Activated naive CD4-positive, alpha-beta T cell treated with anti-CD3 and anti-CD28 coated beads for 36 hours (primary cell): ENCODE measurements at regions of chr6 and their contacts with region 1.

Region 1: GRCh38 chr6:63352587-63353285 is 33.0 kb upstream of the LGSN start:
- DNase-seq: peak; percentile 11
- H3K4me3 Mint-ChIP-seq: no peak overlapping the region
- H3K27ac Mint-ChIP-seq: no peak overlapping the region
- H3K4me1 Mint-ChIP-seq: peaks cover 8% of the 10 kb centered on the region
- H3K27me3 Mint-ChIP-seq: peaks cover 22% of the 10 kb centered on the region

Region 2: DNA sequence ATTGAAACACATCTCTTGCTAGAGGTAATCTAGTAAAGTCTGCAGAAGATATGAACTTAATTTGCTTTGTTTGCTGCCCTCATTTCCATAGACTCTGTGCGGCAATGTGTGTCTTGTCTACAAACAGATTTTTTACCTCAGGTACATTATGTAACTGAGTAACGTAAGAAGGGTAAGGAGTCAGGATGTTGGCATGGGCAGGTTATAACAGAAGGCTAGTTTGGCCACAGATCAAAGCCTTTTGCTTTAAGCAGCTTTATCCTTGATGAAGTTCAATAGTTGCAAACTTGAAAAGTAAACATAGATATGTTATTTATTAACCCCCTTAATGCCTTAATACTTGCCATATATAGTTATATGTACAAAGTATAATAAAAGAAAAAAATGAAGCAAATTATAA is 533.1 kb before region 1 on chr6:
- CTCF ChIA-PET with region 1: no interaction called
- intact Hi-C with region 1: no loop called
- DNase-seq: no peak
- H3K4me3 Mint-ChIP-seq: no peak overlapping the region
- H3K27ac Mint-ChIP-seq: no peak overlapping the region
- H3K4me1 Mint-ChIP-seq: no peaks in the 10 kb centered on the region
- H3K27me3 Mint-ChIP-seq: no peaks in the 10 kb centered on the region

Region 3: DNA sequence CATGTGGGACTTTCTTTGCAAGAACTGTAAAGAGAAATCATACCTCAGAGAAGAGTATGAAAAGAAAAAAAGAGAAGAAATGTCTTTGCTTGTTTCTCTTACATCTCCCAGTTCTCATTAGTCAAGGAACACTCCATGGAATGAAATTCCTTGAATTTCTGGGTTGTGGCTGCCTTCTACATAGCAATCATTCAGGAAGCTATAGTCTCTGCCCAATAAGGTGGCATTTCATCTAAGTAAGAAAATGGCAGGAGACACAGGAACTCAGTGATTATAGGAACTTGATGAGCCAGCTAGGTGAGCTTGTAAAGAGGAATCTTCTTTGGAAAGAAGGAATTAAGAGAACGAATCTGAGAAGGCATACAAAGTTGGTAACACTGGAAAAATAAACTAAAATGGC is 338.4 kb before region 1 on chr6:
- CTCF ChIA-PET with region 1: no interaction called
- intact Hi-C with region 1: no loop called
- DNase-seq: no peak
- H3K4me3 Mint-ChIP-seq: no peak overlapping the region
- H3K27ac Mint-ChIP-seq: no peak overlapping the region
- H3K4me1 Mint-ChIP-seq: no peaks in the 10 kb centered on the region
- H3K27me3 Mint-ChIP-seq: no peaks in the 10 kb centered on the region

Region 4: GRCh38 chr6:63764318-63764916 is 411.7 kb after region 1 on chr6:
- CTCF ChIA-PET with region 1: interaction called, 4 read pairs
- intact Hi-C with region 1: loop called (anchors 1 kb)
- DNase-seq: no peak
- H3K4me3 Mint-ChIP-seq: no peak overlapping the region
- H3K27ac Mint-ChIP-seq: no peak overlapping the region
- H3K4me1 Mint-ChIP-seq: no peaks in the 10 kb centered on the region
- H3K27me3 Mint-ChIP-seq: no peaks in the 10 kb centered on the region

Region 5: GRCh38 chr6:63802606-63803206 is 450.0 kb after region 1 on chr6:
- CTCF ChIA-PET with region 1: interaction called, 10 read pairs
- intact Hi-C with region 1: loop called (anchors 1 kb)
- DNase-seq: no peak
- H3K4me3 Mint-ChIP-seq: no peak overlapping the region
- H3K27ac Mint-ChIP-seq: no peak overlapping the region
- H3K4me1 Mint-ChIP-seq: no peaks in the 10 kb centered on the region
- H3K27me3 Mint-ChIP-seq: peaks cover 9% of the 10 kb centered on the region